Colonic mucosa (tissue), 4 donors: ENCODE measurements at regions of chr5 and their contacts with region 1.

Region 1: DNA sequence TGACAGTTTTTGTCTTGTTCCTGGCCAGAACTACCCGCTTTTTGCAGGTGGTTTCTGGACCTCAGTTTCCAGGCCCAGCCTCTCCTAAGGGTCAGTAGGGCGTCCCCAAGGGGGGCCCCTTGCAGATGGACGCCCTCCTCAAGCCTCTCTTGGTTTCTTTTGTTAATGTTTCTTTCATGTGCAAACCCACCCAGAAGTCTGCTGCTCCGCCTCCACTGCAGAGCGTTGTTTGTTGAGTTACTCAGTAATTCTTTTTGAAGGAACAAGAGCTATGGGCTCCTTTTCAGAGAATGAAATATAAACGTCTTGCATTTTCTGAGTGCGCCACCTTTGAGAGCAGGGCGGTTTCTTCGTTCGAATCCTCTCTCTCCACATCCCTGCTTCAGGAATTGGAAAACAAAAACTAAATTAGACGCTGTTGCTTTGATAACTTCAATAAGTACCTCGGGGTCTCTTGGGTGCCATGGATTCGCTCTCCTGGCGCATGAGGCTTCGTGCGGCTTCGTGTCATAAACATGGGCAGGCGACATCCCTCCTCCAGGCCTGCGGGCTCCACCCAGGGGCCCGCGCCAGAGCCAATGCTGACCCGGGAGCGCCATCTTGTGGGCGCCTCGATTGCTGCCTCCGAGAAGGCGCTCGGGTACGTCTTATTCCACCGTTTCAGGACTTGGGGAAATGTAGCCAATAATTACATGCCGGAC is 38.3 kb upstream of the CKMT2 start:
- DNase-seq: peak; percentile 83
- H3K4me3 ChIP-seq: no peak overlapping the region
- H3K27ac ChIP-seq: no peak overlapping the region
- H3K4me1 ChIP-seq: no peaks in the 10 kb centered on the region
- H3K27me3 ChIP-seq: no peaks in the 10 kb centered on the region
- CTCF ChIP-seq: peak; percentile 92

Region 2: GRCh38 chr5:80686757-80687156 is 508.0 kb before region 1 on chr5:
- intact Hi-C with region 1: loop called (anchors 10 kb)
- DNase-seq: no peak
- H3K4me3 ChIP-seq: no peak overlapping the region
- H3K27ac ChIP-seq: no peak overlapping the region
- H3K4me1 ChIP-seq: no peaks in the 10 kb centered on the region
- H3K27me3 ChIP-seq: no peaks in the 10 kb centered on the region
- CTCF ChIP-seq: peak; percentile 22

Region 3: DNA sequence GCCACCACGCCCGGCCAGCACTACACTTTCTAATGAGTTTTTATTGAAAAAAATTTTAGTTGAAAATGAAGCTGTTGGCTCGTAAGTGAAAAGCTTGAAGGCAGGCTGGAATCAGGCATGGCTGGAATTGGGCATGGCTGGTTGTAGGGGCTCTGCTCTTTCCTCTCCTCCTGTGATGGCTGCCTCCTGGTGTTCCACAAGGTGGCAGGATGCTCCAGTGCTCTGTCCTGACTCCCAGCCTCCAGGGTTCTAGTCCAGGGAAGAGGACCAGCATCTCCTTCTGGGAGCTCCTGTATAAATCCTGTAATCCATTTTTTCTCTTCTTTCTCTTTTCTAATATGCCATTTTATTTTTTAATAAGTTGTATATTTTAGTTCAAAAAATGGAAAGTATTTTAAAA is 482.8 kb before region 1 on chr5:
- intact Hi-C with region 1: loop called (anchors 10 kb)
- DNase-seq: no peak
- H3K4me3 ChIP-seq: no peak overlapping the region
- H3K27ac ChIP-seq: no peak overlapping the region
- H3K4me1 ChIP-seq: no peaks in the 10 kb centered on the region
- H3K27me3 ChIP-seq: no peaks in the 10 kb centered on the region
- CTCF ChIP-seq: no peak

Region 4: DNA sequence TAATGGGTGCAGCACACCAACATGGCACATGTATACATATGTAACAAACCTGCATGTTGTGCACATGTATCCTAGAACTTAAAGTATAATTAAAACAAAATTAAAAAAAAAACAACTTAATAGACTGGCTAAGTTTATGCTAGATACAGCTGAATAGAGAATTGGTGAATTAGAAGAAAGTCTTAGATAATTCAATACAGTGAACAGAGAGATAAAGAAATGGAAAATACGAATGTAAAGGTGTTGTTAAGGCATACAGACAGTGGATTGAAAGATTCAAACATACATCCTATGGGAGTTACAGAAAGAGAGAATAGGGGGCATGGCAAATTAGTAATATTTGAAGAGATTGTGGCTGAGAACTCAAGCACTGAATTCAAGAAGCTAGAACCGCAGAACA is 159.3 kb before region 1 on chr5:
- intact Hi-C with region 1: no loop called
- DNase-seq: no peak
- H3K4me3 ChIP-seq: no peak overlapping the region
- H3K27ac ChIP-seq: no peak overlapping the region
- H3K4me1 ChIP-seq: no peaks in the 10 kb centered on the region
- H3K27me3 ChIP-seq: no peaks in the 10 kb centered on the region
- CTCF ChIP-seq: no peak

Region 5: DNA sequence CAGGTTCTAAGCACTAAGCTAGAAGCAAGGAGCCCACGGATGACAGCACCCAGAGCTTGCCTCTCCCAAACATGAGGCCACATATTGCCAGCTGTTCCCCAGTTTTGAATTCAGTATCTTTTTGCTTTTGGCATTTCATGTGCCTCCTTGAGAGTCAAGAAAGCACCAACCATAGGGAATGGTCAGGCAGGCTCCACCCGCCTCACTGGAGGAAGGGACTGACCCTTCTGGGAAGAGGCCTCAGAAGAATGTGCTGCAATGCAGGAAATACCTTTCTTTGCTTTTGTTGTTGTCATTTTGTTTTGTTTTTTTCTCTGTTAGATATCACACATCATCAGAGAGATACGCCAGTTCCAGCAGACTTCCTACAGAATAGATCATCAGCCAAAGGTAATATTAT is 24.6 kb after region 1 on chr5:
- intact Hi-C with region 1: no loop called
- DNase-seq: no peak
- H3K4me3 ChIP-seq: no peak overlapping the region
- H3K27ac ChIP-seq: no peak overlapping the region
- H3K4me1 ChIP-seq: no peaks in the 10 kb centered on the region
- H3K27me3 ChIP-seq: no peaks in the 10 kb centered on the region
- CTCF ChIP-seq: no peak